HepG2 (cell line): ENCODE measurements at regions of chr7 and their contacts with region 1.

Region 1: DNA sequence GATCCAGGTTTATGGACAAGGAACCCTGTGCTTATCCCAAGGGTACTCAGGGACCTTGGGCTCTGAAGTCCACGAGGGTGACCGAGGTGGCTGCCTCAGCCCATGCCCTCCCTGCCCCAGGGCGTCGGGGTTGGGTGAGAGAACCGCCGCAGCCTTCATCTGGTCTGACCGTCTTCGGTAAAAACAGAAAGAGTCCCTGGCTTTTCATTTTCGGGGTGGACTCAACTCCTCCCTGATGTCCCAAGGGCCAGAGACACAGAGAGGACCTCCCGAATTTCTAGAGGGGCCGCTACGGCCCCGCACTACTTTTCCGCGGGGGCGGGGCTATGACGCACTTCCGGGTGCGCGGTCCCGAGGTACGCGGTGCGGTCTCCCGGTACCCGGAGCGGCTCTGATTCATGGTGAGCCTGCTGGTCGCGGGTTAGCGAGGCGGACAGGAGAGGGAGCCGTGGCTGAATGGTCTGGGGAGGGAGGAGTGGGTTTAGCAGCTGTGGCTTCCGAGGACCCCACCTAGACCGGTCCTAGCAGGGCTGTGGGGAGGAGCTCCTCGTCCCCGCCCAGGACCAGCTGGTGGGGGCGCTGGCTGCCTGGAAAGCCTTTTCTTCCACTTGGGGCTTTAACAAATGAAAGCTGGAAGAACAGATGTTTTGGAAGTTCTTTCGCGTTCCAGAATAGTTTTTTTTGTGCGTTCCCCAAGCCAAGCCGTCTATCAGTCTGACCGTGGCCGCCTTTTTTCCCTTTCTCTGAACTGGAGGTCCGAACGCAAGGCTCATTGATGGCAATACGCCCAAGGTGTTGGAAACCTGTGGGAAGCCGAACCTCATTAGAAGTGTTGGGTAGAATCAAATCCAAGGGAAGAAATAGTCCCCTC is at the start of gene ZSCAN21:
- DNase-seq: peak; percentile 75
- ATAC-seq: peak; percentile 92
- H3K4me3 ChIP-seq: peak within 1 kb of the TSS; percentile 62 to 80 (median 76)
- H3K27ac ChIP-seq: peak within 1 kb of the TSS; percentile 77
- H3K4me1 ChIP-seq: peaks cover 29% of the 10 kb centered on the region
- H3K27me3 ChIP-seq: no peaks in the 10 kb centered on the region
- CTCF ChIP-seq: peak; percentile 62
- EP300 ChIP-seq: no peak
- POLR2A ChIP-seq: peak; percentile 73 to 75
- RAD21 ChIP-seq: no peak
- total RNA-seq, gene ZSCAN21: 10.0 and 11.8 TPM in 2 replicates

Region 2: GRCh38 chr7:99910976-99911375 is 138.7 kb before region 1 on chr7:
- CTCF ChIA-PET with region 1: interaction called, 5 read pairs
- POLR2A ChIA-PET with region 1: interaction called, 3 read pairs
- in situ Hi-C with region 1: loop called (anchors 10 kb)
- intact Hi-C with region 1: loop called (anchors 2 kb)
- DNase-seq: no peak
- ATAC-seq: no peak
- H3K4me3 ChIP-seq: no peak overlapping the region
- H3K27ac ChIP-seq: no peak overlapping the region
- H3K4me1 ChIP-seq: no peaks in the 10 kb centered on the region
- H3K27me3 ChIP-seq: no peaks in the 10 kb centered on the region
- CTCF ChIP-seq: no peak
- EP300 ChIP-seq: no peak
- POLR2A ChIP-seq: no peak
- RAD21 ChIP-seq: no peak

Region 3: GRCh38 chr7:99918959-99919813 is 130.5 kb before region 1 on chr7 and contains the start of gene TRIM4:
- CTCF ChIA-PET with region 1: no interaction called
- POLR2A ChIA-PET with region 1: interaction called, 5 read pairs
- in situ Hi-C with region 1: loop called (anchors 10 kb)
- intact Hi-C with region 1: no loop called
- DNase-seq: peak; percentile 90
- ATAC-seq: peak; percentile 99
- H3K4me3 ChIP-seq: peak within 1 kb of the TSS; percentile 82 to 90 (median 86)
- H3K27ac ChIP-seq: peak within 1 kb of the TSS; percentile 90
- H3K4me1 ChIP-seq: peaks cover 35% of the 10 kb centered on the region
- H3K27me3 ChIP-seq: no peaks in the 10 kb centered on the region; a peak in 1 of 5 replicates
- CTCF ChIP-seq: peak; percentile 67
- EP300 ChIP-seq: no peak; a peak in 1 of 4 replicates
- POLR2A ChIP-seq: peak; percentile 84 to 85
- RAD21 ChIP-seq: peak; percentile 67
- total RNA-seq, gene TRIM4: 21.7 and 25.1 TPM in 2 replicates

Region 4: GRCh38 chr7:99990460-99990852 is 59.2 kb before region 1 on chr7:
- CTCF ChIA-PET with region 1: interaction called, 33 read pairs
- POLR2A ChIA-PET with region 1: interaction called, 12 read pairs
- in situ Hi-C with region 1: loop called (anchors 5 kb)
- intact Hi-C with region 1: loop called (anchors 1 kb)
- DNase-seq: no peak
- ATAC-seq: no peak
- H3K4me3 ChIP-seq: no peak overlapping the region; a peak in 1 of 6 replicates
- H3K27ac ChIP-seq: no peak overlapping the region
- H3K4me1 ChIP-seq: peaks cover 60% of the 10 kb centered on the region
- H3K27me3 ChIP-seq: no peaks in the 10 kb centered on the region
- CTCF ChIP-seq: no peak
- EP300 ChIP-seq: no peak
- POLR2A ChIP-seq: no peak
- RAD21 ChIP-seq: no peak

Region 5: DNA sequence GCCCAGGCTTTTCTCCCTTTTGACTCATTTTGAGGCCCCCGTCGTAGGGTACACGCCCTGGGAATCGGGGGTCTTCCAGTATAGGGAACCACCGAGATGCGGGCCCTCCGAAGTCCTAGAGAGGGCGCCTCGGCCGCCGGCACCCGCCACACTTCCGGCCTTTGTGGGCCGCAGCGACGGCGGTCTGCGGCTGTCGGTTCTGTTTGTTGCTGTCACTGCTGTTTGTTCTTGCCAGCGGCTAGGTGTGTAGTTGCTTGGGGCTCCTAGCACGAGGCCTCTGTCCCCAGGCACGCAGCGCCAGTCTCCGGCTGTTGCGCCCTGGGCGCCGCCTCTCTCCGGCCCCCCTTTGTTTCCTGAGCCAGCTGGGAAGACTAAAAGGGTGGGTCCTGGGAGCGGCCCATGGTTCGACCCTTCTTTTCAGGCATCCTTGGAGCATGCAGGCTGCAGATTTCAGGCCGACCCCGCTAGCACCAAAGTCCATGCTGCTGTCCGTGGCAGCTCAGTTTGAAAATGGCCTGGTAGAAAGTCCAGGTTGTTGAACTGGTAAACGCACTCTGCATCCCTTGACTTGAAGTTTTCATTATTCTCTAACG is 52.0 kb before region 1 on chr7:
- CTCF ChIA-PET with region 1: interaction called, 33 read pairs
- POLR2A ChIA-PET with region 1: interaction called, 12 read pairs
- in situ Hi-C with region 1: loop called (anchors 5 kb)
- intact Hi-C with region 1: loop called (anchors 1 kb)
- DNase-seq: peak; percentile 87
- ATAC-seq: peak; percentile 92
- H3K4me3 ChIP-seq: peak overlapping the region; percentile 20 to 59 (median 48); a peak in 5 of 6 replicates
- H3K27ac ChIP-seq: peak overlapping the region; percentile 95
- H3K4me1 ChIP-seq: peaks cover 91% of the 10 kb centered on the region
- H3K27me3 ChIP-seq: no peaks in the 10 kb centered on the region
- CTCF ChIP-seq: peak; percentile 66
- EP300 ChIP-seq: peak in 1 of 2 experiments; percentile 71; a peak in 2 of 4 replicates
- POLR2A ChIP-seq: peak; percentile 80
- RAD21 ChIP-seq: peak; percentile 76

Region 6: DNA sequence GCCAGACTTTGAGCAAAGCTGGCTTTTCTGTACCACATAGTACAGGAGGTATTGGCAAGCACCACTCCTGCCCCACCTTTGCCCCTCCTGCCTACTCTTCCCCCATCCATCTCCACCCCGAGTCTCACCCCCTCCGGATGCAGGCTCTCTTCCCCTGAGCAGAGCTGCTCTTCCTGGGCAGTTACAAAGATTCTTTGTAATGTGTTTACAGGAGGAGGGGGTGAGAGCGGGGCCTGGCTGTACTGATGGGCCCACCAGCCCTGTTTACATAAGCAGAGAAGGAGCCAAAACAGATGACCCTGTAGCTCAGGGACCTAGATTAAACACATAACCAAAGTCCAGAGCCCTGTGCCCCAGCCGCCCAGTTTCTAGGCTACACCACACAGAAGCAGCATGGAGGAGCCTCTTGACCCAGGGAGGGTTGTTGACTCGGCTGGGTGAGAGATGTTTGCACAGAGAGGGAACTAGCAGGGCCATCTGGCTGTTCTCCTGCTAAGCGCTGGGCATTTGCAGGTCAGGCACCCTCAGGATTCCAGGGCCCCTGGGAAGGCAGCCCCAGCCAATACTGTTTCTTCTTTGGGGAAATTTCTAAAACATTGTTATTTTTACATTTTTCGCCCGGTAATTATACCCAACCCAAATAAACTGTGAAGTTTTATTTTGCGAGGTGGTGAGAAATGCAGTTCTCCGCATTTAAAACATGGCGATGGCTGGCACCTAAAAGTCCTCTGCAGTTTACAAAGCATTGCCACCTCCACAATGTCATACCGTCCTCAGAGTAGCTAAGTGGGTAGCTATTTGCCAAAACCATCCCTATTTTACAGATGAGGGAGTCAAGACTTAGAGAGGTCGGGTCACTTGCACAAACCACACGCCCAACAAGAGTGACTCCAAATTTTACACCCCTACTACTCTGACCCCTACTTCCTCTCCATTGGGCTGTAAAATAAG is 45.7 kb before region 1 on chr7:
- CTCF ChIA-PET with region 1: no interaction called
- POLR2A ChIA-PET with region 1: interaction called, 13 read pairs
- in situ Hi-C with region 1: no loop called
- intact Hi-C with region 1: no loop called
- DNase-seq: peak; percentile 99
- ATAC-seq: peak; percentile 96
- H3K4me3 ChIP-seq: peak overlapping the region in 1 of 3 experiments; percentile 12; a peak in 1 of 6 replicates
- H3K27ac ChIP-seq: peak overlapping the region; percentile 96
- H3K4me1 ChIP-seq: peaks cover 97% of the 10 kb centered on the region
- H3K27me3 ChIP-seq: no peaks in the 10 kb centered on the region
- CTCF ChIP-seq: peak; percentile 35; the same call in 1 of the 2 replicates
- EP300 ChIP-seq: peak; percentile 74 to 98; a peak in 3 of 4 replicates
- POLR2A ChIP-seq: 0 out of 4 replicates have a peak, but pooled peaks of 1 of the 2 experiments have one; percentile 18
- RAD21 ChIP-seq: peak; percentile 75

Region 7: GRCh38 chr7:100034871-100035510 is 14.7 kb before region 1 on chr7:
- CTCF ChIA-PET with region 1: no interaction called
- POLR2A ChIA-PET with region 1: no interaction called
- in situ Hi-C with region 1: no loop called
- intact Hi-C with region 1: no loop called
- DNase-seq: no peak
- ATAC-seq: no peak
- H3K4me3 ChIP-seq: no peak overlapping the region
- H3K27ac ChIP-seq: peak overlapping the region; percentile 17
- H3K4me1 ChIP-seq: peaks cover 46% of the 10 kb centered on the region
- H3K27me3 ChIP-seq: no peaks in the 10 kb centered on the region
- CTCF ChIP-seq: no peak
- EP300 ChIP-seq: no peak
- POLR2A ChIP-seq: no peak
- RAD21 ChIP-seq: no peak